AG04450 (cell line): ENCODE measurements at regions of chr5 and their contacts with region 1.

Region 1: DNA sequence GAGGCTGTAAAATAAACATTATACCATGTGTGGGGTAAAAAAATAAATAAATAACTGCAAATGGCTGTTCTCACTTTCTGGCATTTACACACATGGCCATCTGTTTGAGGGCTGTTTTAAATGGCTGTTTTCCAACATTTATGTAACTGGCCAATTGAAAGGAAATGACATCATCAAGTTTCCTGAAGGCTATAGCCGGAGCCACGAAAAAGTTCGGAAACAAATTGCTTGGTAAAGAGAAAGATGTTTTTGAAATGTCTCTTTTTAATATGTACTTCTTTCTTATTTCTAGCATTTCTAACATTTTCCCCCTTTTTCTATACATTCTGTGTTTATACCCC is 95.4 kb upstream of the DAB2 start:
- DNase-seq: peak; percentile 83
- H3K4me3 ChIP-seq: no peak overlapping the region
- H3K27ac ChIP-seq: no peak overlapping the region
- H3K27me3 ChIP-seq: no peaks in the 10 kb centered on the region
- CTCF ChIP-seq: no peak

Region 2: DNA sequence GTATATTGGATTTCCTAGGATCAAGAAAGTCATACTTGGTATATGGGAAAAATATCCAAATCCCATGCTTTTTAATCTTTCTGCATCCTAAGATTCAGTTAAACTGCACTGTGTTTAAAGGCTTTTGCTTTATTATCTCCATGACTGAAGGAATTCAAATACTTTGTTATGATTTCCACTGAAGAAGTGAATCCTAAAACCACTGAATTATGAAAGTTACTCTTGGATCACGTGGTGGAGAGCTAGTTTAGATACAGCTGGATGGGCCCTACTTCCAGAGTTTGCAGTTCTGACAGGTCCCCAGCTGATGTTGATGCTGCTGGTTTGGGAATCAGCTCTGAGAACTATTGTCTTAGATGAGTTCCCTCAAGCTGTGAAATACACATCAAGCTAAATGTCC is 100.4 kb before region 1 on chr5:
- CTCF ChIA-PET with region 1: interaction called, 15 read pairs
- POLR2A ChIA-PET with region 1: interaction called, 75 read pairs
- DNase-seq: no peak
- H3K4me3 ChIP-seq: no peak overlapping the region
- H3K27ac ChIP-seq: no peak overlapping the region
- H3K27me3 ChIP-seq: no peaks in the 10 kb centered on the region
- CTCF ChIP-seq: no peak

Region 3: DNA sequence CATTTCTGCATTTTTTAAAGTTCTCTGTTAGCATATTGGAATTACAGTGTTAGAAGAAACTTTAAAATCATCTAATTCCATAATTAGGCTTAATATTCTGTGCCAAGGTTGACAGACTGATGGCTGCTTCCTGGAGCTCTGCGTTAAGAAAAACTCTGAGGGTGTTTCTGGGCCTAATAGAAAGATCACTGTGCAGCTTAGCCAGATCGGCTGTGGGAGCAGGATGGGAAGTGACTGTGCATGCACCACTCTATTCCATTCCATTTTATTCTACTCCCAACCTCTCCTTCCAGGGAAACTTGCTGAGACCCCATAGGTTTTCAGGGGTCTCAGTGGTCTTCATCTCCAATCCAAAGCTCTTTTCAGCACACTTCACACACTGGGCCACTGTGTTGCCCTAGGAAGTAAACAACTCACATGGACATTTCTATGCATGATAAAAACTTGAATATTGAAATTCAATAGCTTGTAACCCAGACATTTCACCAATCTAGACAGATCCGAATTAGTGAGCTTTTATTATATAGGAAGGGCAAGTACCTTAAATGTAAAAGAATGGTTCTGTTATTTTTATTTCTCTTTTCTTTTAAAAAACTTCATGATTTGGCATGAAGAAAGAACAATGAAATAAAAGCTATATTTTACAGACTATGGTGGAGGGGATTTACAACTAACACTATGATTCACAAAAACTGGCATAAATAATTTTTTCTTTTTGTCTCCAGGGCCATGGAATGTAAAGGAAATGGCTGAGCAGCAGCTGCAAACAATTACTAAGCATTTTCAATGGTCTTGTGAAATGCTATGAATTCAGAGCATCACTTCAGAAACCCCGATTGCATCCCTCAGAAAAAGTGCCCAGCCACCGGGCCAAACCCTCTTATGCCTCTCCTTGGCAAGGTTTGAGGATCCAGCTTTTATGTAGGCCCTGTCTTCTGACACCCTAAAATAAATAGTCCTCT is 44.0 kb before region 1 on chr5:
- CTCF ChIA-PET with region 1: no interaction called
- POLR2A ChIA-PET with region 1: interaction called, 10 read pairs
- DNase-seq: peak; percentile 52
- H3K4me3 ChIP-seq: no peak overlapping the region
- H3K27ac ChIP-seq: peak overlapping the region; percentile 59
- H3K27me3 ChIP-seq: no peaks in the 10 kb centered on the region
- CTCF ChIP-seq: no peak